PC-9 (cell line): ENCODE measurements at regions of chr3 and their contacts with region 1.

Region 1: DNA sequence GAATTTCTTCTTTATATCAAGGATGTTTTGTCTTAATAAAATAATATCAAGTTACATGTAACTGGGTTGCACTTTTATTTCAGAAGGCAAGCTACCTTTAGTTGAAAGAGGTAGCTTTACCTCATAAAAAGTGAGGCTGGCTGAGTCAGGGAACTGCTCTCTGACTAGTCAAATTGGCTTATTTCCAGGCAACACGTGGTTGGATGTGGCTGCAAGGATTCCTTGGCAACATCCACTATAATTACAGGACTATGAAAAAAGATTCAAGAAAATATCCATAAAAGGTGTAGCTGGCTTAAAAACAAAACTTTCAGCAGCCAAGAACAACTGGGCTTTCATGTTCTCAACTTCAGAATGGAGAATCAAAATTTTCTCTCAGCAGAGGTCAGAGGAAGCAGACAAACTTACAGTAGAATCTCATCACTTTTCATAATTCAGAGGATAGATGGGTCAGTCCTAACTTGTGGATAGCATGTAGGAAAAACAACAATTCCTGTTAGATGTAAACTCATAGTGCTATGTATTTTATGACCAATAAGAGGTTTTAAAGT is 779.1 kb downstream of the MECOM start:
- DNase-seq: peak; percentile 33 to 57
- H3K4me3 ChIP-seq: no peak overlapping the region
- H3K27ac ChIP-seq: no peak overlapping the region
- H3K4me1 ChIP-seq: peaks cover 12% of the 10 kb centered on the region
- H3K27me3 ChIP-seq: no peaks in the 10 kb centered on the region
- CTCF ChIP-seq: no peak

Region 2: DNA sequence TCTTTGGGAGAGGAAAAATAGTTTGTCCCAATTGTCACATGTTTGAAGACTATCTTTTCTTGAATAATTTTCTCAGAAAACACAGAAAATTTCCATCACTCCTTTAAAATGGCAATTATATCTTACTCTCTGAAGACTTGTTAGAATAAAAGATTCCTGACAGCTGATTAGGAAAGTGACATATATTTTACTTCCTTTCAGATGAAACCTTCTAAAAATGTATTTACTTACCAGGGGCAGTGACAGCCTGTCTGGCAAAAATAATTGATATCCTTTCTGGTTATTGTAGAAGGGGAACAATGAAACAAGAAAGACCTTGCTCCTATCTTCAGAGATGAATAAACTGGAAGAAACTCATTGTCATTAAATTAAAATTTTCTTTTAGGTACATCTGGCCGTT is 305.4 kb before region 1 on chr3:
- CTCF ChIA-PET with region 1: no interaction called
- POLR2A ChIA-PET with region 1: interaction called, 35 read pairs
- intact Hi-C with region 1: no loop called
- DNase-seq: no peak
- H3K4me3 ChIP-seq: no peak overlapping the region
- H3K27ac ChIP-seq: no peak overlapping the region
- H3K4me1 ChIP-seq: no peaks in the 10 kb centered on the region
- H3K27me3 ChIP-seq: no peaks in the 10 kb centered on the region
- CTCF ChIP-seq: no peak

Region 3: DNA sequence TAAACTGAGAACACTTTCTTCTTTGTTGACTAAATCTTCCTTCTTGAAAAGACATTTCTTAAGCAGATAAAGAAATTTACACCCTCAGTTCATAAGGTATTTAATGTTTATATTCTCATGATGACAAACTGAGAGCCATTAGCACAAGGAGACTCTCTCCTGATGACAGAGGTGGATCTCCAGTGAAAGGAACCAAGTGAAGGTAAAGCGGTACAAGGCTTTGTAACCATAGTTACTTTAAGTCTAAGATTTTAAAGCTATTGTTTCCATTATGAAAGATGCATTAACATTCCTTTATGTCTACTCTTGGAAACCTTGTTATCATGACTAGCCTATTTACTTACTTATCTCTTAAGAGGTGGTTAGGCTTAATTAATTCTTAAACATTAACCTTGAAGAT is 42.0 kb after region 1 on chr3:
- CTCF ChIA-PET with region 1: no interaction called
- POLR2A ChIA-PET with region 1: no interaction called
- intact Hi-C with region 1: no loop called
- DNase-seq: no peak
- H3K4me3 ChIP-seq: no peak overlapping the region
- H3K27ac ChIP-seq: no peak overlapping the region
- H3K4me1 ChIP-seq: no peaks in the 10 kb centered on the region
- H3K27me3 ChIP-seq: no peaks in the 10 kb centered on the region
- CTCF ChIP-seq: no peak

Region 4: GRCh38 chr3:169152319-169152718 is 267.9 kb after region 1 on chr3:
- CTCF ChIA-PET with region 1: no interaction called
- POLR2A ChIA-PET with region 1: no interaction called
- intact Hi-C with region 1: no loop called
- DNase-seq: no peak
- H3K4me3 ChIP-seq: no peak overlapping the region
- H3K27ac ChIP-seq: no peak overlapping the region
- H3K4me1 ChIP-seq: peaks cover 17% of the 10 kb centered on the region; the same call in 1 of the 2 replicates
- H3K27me3 ChIP-seq: no peaks in the 10 kb centered on the region
- CTCF ChIP-seq: no peak

Region 5: GRCh38 chr3:170835336-170835735 is 1950.9 kb after region 1 on chr3:
- CTCF ChIA-PET with region 1: interaction called, 10 read pairs
- POLR2A ChIA-PET with region 1: no interaction called
- intact Hi-C with region 1: no loop called
- DNase-seq: no peak
- H3K4me3 ChIP-seq: no peak overlapping the region
- H3K27ac ChIP-seq: no peak overlapping the region
- H3K4me1 ChIP-seq: no peaks in the 10 kb centered on the region
- H3K27me3 ChIP-seq: no peaks in the 10 kb centered on the region
- CTCF ChIP-seq: no peak